Adrenal gland (tissue), 19 donors: ENCODE measurements at regions of chr20 and their contacts with region 1.

Region 1: DNA sequence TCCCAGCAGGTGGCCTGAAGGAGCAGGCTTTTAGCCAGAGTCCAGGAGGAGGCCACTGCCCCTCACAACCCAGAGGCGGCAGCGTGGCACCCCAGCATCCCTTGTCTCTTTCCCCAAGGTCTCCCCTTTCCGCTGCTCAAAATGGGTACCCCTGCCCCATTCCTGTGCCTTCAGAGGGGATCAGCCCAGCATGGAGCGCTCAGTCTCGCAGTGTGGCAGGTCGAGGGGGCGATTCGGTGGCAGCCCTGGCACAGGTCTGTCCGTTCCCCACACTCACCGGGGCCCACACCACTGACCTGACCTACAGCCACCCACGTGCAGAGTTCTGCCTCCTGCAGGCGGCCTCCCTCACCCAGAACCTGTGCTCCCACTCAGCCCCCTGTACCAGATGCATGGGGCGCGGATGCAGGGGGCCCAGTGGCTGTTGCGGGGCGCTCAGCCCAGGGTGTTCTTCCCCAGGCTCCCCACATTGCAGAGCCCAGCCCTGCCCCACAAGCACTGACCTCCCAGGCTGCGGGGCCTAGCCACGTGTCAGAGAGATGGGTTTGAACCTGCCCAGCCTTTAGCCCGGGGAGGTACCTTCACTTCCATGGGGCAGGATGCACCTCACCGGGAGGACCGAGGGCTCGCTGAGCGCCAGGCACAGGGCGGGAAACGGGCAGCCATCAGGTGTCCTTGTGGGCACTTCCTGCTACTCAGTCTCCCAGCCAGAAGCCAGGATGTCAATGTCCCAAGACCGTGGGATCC is 41.8 kb downstream of the DSTN start:
- DNase-seq: peak in 3 of 7 donors; percentile 39 to 63 (median 39)
- H3K4me3 ChIP-seq: no peak overlapping the region
- H3K27ac ChIP-seq: peak overlapping the region in 3 of 5 donors; percentile 25 to 71 (median 69)
- H3K4me1 ChIP-seq: peaks cover 8 to 17% of the 10 kb centered on the region in 2 donors
- H3K27me3 ChIP-seq: no peaks in the 10 kb centered on the region
- CTCF ChIP-seq: peak in 5 of 6 experiments; percentile 19 to 52 (median 36)
- POLR2A ChIP-seq: no peak

Region 2: GRCh38 chr20:17460119-17460518 is 151.6 kb before region 1 on chr20:
- intact Hi-C with region 1: no loop called
- DNase-seq: no peak
- H3K4me3 ChIP-seq: no peak overlapping the region
- H3K27ac ChIP-seq: no peak overlapping the region
- H3K4me1 ChIP-seq: no peaks in the 10 kb centered on the region
- H3K27me3 ChIP-seq: no peaks in the 10 kb centered on the region
- CTCF ChIP-seq: no peak
- POLR2A ChIP-seq: no peak

Region 3: DNA sequence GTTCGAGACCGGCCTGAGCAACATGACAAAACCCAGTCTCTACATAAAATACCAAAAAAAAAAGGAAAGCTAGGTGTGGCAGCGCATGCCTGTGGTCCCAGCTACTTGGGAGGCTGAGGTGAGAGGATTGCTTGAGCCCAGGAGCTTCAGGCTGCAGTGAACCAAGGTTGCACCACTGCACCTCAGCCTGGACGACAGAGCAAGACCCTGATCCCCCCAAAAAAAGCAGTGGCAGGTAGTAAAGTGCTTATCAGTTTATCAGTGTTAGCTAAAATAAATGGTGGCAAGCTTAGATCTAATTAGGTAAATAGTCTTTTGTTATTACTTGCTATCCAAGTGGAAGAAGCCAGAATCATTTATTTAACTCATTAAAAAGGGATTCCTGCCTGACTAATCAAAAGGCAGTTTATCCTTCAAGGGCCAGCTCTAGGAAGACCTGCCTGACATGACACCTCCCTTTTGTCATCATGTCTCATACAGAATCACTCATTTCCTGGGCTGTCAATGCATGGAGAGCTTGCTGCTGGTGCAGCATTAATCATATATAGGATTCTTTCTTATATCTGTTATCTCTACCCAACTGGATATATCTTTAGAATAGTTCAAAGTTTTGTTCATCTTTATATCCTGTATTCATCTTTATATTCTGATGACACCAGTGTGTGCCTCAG is 32.2 kb before region 1 on chr20:
- intact Hi-C with region 1: loop called in 1 of 2 experiments (anchors 5 kb)
- DNase-seq: no peak
- H3K4me3 ChIP-seq: no peak overlapping the region
- H3K27ac ChIP-seq: no peak overlapping the region
- H3K4me1 ChIP-seq: peaks cover 4 to 30% of the 10 kb centered on the region in 2 donors
- H3K27me3 ChIP-seq: no peaks in the 10 kb centered on the region
- CTCF ChIP-seq: no peak
- POLR2A ChIP-seq: no peak

Region 4: GRCh38 chr20:17646670-17647371 is 35.1 kb after region 1 on chr20:
- intact Hi-C with region 1: no loop called
- DNase-seq: peak in 1 of 7 donors; percentile 7
- H3K4me3 ChIP-seq: no peak overlapping the region
- H3K27ac ChIP-seq: peak overlapping the region; percentile 6 to 71 (median 34)
- H3K4me1 ChIP-seq: peaks cover 42 to 78% of the 10 kb centered on the region in 2 donors
- H3K27me3 ChIP-seq: no peaks in the 10 kb centered on the region
- CTCF ChIP-seq: no peak
- POLR2A ChIP-seq: no peak